ENCODE measurements at regions of chr15 and their contacts with region 1.

Region 1: DNA sequence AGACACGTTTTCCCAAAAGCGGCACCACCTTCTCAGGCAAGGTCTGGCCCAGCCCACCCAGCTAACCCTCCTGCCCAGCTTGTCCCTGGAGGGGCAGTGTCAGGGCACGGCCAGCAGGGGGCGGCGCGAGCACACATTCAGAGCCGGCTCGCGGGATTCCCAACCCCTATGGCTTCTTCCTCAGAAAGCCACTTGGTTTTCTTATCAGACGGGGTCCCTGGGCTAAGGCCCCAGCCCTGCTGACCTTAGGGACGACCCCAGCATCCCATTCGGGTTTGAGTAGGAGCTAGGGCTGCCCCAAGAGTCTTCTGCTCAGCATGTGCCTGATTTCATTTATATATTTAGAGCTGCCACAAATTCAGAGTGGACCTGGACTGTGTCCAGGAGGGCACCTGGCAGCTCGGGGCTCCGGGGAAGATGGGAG is 14.5 kb downstream of the RLBP1 start:
- DNase-seq: peak; percentile 16
- H3K4me3 ChIP-seq: peak overlapping the region; percentile 41
- H3K27ac ChIP-seq: no peak overlapping the region
- H3K27me3 ChIP-seq: no peaks in the 10 kb centered on the region
- CTCF ChIP-seq: peak; percentile 97

Region 2: GRCh38 chr15:89171136-89172072 is 35.5 kb before region 1 on chr15:
- CTCF ChIA-PET with region 1: interaction called, 15 read pairs
- POLR2A ChIA-PET with region 1: no interaction called
- DNase-seq: no peak
- H3K4me3 ChIP-seq: no peak overlapping the region
- H3K27ac ChIP-seq: no peak overlapping the region
- H3K27me3 ChIP-seq: no peaks in the 10 kb centered on the region
- CTCF ChIP-seq: peak; percentile 72

Region 3: DNA sequence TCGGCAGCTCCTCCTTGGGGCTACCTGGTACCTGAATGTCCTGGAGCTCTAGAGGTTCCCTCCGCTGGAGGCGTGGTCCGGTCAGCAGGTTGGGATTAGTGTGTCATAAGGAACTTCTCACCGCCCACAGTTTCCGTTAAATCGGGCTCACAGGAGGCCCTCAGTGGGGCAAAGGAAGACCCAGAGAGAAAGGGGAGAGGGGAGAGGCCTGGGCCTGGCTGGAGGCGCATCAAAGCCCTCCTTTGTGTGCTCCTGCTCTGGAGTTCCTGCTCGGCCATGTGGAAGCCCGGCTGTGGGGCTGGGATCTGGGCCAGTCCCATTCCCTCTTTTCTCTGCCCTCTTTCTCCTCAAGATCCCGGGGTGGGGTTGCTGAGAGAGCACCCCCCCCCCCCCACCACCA is 14.6 kb after region 1 on chr15 and contains the start of gene RLBP1:
- CTCF ChIA-PET with region 1: interaction called, 48 read pairs
- POLR2A ChIA-PET with region 1: no interaction called
- DNase-seq: no peak
- H3K4me3 ChIP-seq: no peak within 1 kb of the TSS
- H3K27ac ChIP-seq: no peak within 1 kb of the TSS
- H3K27me3 ChIP-seq: peaks cover 34% of the 10 kb centered on the region
- CTCF ChIP-seq: no peak
- polyA plus RNA-seq, gene RLBP1: not detected in 2 replicates

Region 4: GRCh38 chr15:89243691-89244471 is 37.0 kb after region 1 on chr15 and contains the start of gene FANCI:
- CTCF ChIA-PET with region 1: interaction called, 53 read pairs
- POLR2A ChIA-PET with region 1: no interaction called
- DNase-seq: peak; percentile 76
- H3K4me3 ChIP-seq: peak within 1 kb of the TSS; percentile 93
- H3K27ac ChIP-seq: peak within 1 kb of the TSS; percentile 57
- H3K27me3 ChIP-seq: no peaks in the 10 kb centered on the region
- CTCF ChIP-seq: peak; percentile 53
- polyA plus RNA-seq, gene FANCI: 9.2 and 13.2 TPM in 2 replicates

Region 5: GRCh38 chr15:89293012-89293411 is 86.1 kb after region 1 on chr15:
- CTCF ChIA-PET with region 1: interaction called, 108 read pairs
- POLR2A ChIA-PET with region 1: interaction called, 4 read pairs
- DNase-seq: no peak
- H3K4me3 ChIP-seq: no peak overlapping the region
- H3K27ac ChIP-seq: no peak overlapping the region
- H3K27me3 ChIP-seq: no peaks in the 10 kb centered on the region
- CTCF ChIP-seq: no peak

Region 6: DNA sequence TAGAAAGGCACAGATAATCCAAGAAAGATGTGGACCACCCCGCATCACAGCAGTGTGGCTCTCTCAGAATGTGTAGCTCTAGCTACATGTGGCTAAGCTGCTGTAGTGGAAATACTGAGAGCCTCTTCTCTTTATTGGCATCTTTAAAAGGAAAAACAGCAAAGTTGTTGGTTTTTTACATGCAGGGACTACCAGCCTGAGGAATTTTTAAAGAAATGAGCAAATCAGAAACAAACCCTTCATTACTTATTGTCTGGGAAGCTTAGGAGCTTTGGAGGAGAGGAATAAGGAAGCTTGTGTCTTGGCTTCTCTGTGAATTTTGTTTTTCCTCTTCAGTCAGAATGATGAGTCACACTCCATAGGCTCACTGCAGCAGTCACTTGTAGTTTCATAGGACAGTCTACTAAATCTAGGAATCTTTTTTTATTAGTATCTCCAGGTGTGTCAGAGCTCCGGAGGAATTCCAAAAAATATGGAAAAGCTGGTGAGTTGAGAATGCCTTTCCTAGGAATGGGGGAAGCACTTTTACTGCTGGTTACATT is 100.2 kb after region 1 on chr15:
- CTCF ChIA-PET with region 1: interaction called, 108 read pairs
- POLR2A ChIA-PET with region 1: no interaction called
- DNase-seq: no peak
- H3K4me3 ChIP-seq: no peak overlapping the region
- H3K27ac ChIP-seq: no peak overlapping the region
- H3K27me3 ChIP-seq: no peaks in the 10 kb centered on the region
- CTCF ChIP-seq: no peak

Measured in AG04450 (cell line).